ENCODE measurements at regions of chr5 and their contacts with region 1.

Region 1: GRCh38 chr5:121497176-121497575 is 354.5 kb upstream of the FTMT start:
- DNase-seq: no peak

Region 2: DNA sequence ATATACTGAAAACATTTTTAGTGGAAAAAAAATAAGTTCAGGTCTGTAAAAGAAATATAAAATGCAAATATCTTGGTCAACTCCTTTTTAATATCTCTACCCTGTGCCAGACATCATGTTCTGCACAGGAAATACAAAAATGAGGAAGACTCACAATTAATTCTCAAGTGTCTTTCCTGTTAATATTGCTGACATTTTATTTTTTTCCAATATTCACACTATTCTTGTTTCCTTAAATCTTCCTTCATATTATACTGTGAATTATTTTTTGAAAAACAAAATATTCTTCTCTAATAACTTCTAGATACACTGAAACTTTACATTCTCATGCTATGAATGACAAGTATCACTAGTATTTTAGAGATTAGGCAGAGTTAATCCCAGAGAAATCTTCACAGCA is 19.8 kb after region 1 on chr5:
- intact Hi-C with region 1: loop called in 1 of 2 experiments (anchors 1 kb)
- DNase-seq: no peak

Region 3: GRCh38 chr5:121783700-121784099 is 286.5 kb after region 1 on chr5:
- intact Hi-C with region 1: no loop called
- DNase-seq: no peak

Region 4: GRCh38 chr5:121937762-121938161 is 440.6 kb after region 1 on chr5:
- intact Hi-C with region 1: no loop called
- DNase-seq: no peak